Activated CD4-positive, alpha-beta memory T cell treated with anti-CD3 and anti-CD28 coated beads for 36 hours (primary cell): ENCODE measurements at regions of chr12 and their contacts with region 1.

Region 1: GRCh38 chr12:47758834-47759690 is at the start of gene RAPGEF3:
- DNase-seq: peak; percentile 86
- H3K4me3 Mint-ChIP-seq: peak within 1 kb of the TSS; percentile 68
- H3K27ac Mint-ChIP-seq: no peak within 1 kb of the TSS
- H3K4me1 Mint-ChIP-seq: peaks cover 46% of the 10 kb centered on the region
- H3K27me3 Mint-ChIP-seq: no peaks in the 10 kb centered on the region
- total RNA-seq, gene RAPGEF3: 2.1 to 2.5 TPM

Region 2: DNA sequence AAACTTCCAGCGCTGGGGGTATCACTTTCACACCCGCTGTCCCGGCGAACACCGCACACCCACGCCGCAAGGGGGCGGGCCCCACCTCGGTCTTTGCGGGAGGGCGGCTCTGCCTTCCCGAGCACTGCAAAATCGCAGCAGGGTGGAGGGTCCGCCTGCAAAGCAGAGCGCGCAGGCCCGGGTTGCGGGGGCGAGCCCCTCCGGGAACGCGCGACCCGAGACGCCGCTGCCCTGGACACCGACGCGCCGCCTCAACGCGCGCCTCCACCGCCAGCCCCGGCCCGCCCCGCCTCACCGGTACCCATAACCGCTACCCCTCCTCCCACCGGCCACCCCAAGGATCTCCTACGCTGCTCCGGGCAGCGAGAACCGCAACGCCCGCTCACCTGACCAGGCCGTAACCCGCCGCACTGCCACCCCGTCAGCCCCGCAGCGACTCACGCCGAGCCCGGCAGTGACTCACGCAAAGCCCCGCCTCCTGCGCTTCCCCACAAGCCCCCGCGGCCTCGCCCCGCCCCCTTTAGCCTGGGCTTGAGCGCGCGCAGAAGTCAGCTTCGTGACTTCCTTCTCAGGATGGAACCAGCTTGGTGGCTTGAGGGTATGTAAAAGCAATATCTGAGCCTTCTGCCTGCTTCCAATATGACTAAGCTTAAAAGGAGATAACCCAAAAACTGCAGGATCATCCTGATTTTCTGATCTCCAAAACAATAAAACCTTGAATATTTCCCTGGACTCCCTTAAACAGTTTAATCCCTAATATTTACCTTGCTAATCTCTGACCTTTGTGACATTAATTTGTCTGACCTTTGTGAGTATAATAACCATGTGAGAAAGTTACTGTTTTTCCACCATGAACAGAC is 53.3 kb before region 1 on chr12 and contains the start of gene RPAP3:
- CTCF ChIA-PET with region 1: interaction called, 5 read pairs
- POLR2A ChIA-PET with region 1: interaction called, 3 read pairs
- intact Hi-C with region 1: loop called (anchors 2 kb)
- DNase-seq: peak; percentile 99
- H3K4me3 Mint-ChIP-seq: peak within 1 kb of the TSS; percentile 96
- H3K27ac Mint-ChIP-seq: peak within 1 kb of the TSS; percentile 95
- H3K4me1 Mint-ChIP-seq: peaks cover 50% of the 10 kb centered on the region
- H3K27me3 Mint-ChIP-seq: no peaks in the 10 kb centered on the region
- total RNA-seq, gene RPAP3: 49.4 to 50.2 TPM

Region 3: DNA sequence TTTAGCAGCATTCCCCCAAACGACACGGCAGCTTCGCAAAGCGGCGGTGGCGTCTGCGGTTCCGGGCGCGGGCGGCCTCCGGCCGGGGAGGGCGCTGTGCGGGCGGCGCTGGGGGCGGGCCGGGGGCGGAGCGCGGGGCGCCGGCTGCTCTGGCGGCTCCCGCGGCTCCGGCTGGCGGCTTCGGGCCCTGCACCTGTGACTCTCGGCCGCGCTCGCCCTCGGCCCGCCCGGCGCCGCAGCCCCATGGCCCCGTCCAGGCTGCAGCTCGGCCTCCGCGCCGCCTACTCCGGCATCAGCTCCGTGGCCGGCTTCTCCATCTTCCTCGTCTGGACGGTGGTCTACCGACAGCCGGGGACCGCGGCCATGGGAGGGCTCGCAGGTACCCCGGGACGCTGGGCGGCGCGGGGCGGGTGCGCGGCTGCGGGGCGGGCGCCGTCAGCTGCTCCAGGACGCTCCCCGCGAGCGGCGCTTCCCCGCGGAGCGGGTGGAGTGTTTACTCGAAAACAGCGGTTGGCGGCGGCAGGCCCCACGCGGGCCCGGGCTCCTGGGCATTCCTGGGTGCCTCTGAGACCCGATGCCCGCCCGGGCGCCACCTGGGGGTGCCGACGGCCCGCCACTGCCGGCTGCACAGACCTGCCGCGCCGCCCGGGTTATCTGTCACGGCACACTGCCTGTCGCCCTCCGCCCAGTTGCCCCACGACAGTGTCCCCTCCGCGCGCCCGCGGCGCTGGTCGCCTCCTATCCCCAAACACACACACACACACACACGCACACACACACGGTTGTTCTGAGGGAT is 14.2 kb after region 1 on chr12 and contains the start of gene SLC48A1:
- CTCF ChIA-PET with region 1: interaction called, 124 read pairs
- POLR2A ChIA-PET with region 1: interaction called, 9 read pairs
- intact Hi-C with region 1: no loop called
- DNase-seq: peak; percentile 80
- H3K4me3 Mint-ChIP-seq: peak within 1 kb of the TSS; percentile 85
- H3K27ac Mint-ChIP-seq: no peak within 1 kb of the TSS
- H3K4me1 Mint-ChIP-seq: peaks cover 18% of the 10 kb centered on the region
- H3K27me3 Mint-ChIP-seq: no peaks in the 10 kb centered on the region
- total RNA-seq, gene SLC48A1: 13.7 to 16.2 TPM